GM12878 (cell line): ENCODE measurements at regions of chr18 and their contacts with region 1.

Region 1: DNA sequence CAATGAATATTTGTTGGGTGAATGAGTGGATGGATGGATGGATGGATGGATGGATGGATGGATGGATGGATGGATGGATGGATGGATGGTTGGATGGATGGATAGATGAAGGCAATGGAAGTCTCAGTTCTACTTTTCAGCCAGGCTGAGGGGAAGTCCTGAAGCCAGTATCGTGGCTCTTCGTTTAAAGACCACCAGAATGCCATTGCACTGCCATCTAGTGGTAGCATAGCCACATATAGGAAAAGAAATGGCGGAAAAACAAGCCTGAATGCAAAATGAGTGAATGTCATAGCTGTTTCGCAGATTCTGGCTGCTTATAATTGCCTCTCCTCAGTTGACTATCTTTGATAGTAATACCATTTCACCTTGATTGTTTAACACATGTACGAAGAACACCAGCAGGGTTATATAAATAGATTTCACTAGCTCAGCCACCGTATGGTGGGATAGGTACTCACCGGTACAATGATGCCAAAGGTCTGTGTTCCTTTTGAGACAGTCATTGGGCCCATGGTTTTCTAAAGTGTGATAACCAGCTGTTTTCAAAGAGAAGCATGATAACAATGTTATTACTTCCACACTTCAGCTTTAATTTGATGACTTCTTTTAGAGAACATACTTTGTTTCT is 62.3 kb upstream of the GREB1L start:
- DNase-seq: peak; percentile 32
- ATAC-seq: peak; percentile 94
- H3K4me3 ChIP-seq: no peak overlapping the region
- H3K27ac ChIP-seq: no peak overlapping the region
- H3K4me1 ChIP-seq: no peaks in the 10 kb centered on the region
- H3K27me3 ChIP-seq: no peaks in the 10 kb centered on the region
- CTCF ChIP-seq: peak; percentile 78 to 85 (median 78)
- EP300 ChIP-seq: no peak
- POLR2A ChIP-seq: no peak
- RAD21 ChIP-seq: peak; percentile 83

Region 2: DNA sequence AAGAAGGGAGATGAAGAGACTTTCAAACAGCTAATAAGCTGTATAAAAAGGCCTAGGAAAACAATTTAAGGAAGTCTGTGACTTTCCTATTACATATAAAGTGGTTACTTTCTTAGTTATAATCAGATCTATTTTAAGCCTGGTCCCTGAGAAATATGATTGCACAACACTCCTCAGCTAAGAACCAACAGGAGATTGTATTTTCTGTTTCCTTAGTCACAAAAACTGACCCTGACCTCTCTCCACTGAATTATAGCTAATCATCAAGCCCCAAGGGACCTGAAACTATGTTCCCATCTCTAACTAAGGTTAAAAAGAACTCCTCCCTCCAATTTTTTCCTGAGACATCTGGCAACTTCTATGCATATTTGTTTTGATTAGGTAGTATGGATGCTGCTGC is 175.0 kb before region 1 on chr18:
- CTCF ChIA-PET with region 1: interaction called, 9 read pairs
- POLR2A ChIA-PET with region 1: no interaction called
- RAD21 ChIA-PET with region 1: interaction called, 3 read pairs
- SMC1A ChIA-PET with region 1: interaction called, 3 read pairs
- in situ Hi-C with region 1: no loop called
- intact Hi-C with region 1: loop called (anchors 10 kb)
- DNase-seq: no peak
- ATAC-seq: no peak
- H3K4me3 ChIP-seq: no peak overlapping the region
- H3K27ac ChIP-seq: no peak overlapping the region
- H3K4me1 ChIP-seq: no peaks in the 10 kb centered on the region
- H3K27me3 ChIP-seq: no peaks in the 10 kb centered on the region
- CTCF ChIP-seq: no peak
- EP300 ChIP-seq: no peak
- POLR2A ChIP-seq: no peak
- RAD21 ChIP-seq: no peak

Region 3: DNA sequence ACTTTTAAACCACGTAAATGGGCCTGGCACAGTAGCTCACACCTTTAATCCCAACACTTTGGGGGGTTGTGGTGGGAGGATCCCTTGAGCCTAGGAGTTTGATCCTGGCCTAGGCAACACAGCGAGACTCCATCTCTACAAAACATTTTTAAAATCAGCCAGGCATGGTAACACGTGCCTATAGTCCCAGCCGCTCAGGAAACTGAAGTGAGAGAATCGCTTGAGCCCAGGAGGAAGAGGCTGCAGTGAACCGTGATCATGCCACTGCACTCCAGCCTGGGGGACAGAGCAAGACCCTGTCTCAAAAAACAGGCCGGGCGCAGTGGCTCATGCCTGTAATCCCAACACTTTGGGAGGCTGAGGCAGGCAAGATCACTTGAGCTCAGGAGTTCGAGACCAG is 80.3 kb before region 1 on chr18:
- CTCF ChIA-PET with region 1: no interaction called
- POLR2A ChIA-PET with region 1: no interaction called
- RAD21 ChIA-PET with region 1: no interaction called
- SMC1A ChIA-PET with region 1: no interaction called
- in situ Hi-C with region 1: loop called (anchors 25 kb)
- intact Hi-C with region 1: no loop called
- DNase-seq: no peak
- ATAC-seq: peak; percentile 78
- H3K4me3 ChIP-seq: peak overlapping the region; percentile 52
- H3K27ac ChIP-seq: peak overlapping the region; percentile 42
- H3K4me1 ChIP-seq: peaks cover 6% of the 10 kb centered on the region
- H3K27me3 ChIP-seq: no peaks in the 10 kb centered on the region
- CTCF ChIP-seq: no peak
- EP300 ChIP-seq: no peak
- POLR2A ChIP-seq: no peak
- RAD21 ChIP-seq: no peak

Region 4: DNA sequence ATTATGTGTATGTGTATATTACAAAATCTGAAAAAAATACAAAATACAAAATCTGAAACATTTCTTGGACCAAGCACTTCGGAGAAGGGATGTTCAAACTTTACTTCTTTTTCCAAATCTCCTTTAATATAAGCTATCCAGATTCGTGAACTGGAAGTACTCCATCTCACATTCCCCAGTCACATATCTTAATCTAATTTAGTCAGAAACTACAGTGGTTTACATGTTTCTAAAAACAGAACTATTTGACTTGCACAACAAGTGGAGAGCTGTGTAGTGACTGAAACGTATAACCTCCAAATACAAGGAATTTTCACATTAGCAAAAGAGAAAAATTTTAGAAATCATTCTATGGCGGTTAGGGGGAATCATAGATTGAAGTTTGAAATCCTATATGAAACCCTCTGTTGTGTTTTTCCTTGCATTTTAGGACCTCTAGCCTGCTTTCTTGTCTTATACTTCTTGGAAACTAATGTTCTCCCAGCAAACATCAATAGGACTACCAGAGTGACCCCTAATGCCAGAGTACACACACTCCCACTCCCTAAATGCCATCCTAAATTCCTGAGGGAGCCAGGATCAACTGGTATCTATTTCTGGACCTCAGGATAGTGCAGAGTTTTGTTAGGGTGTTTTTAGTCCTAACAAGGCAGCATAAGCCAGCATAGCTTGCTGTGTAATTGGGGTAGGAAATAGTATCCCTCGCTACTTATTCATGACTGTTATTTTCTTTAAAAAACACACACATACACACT is 37.9 kb before region 1 on chr18:
- CTCF ChIA-PET with region 1: no interaction called
- POLR2A ChIA-PET with region 1: no interaction called
- RAD21 ChIA-PET with region 1: no interaction called
- SMC1A ChIA-PET with region 1: no interaction called
- in situ Hi-C with region 1: no loop called
- intact Hi-C with region 1: loop called (anchors 5 kb)
- DNase-seq: no peak
- ATAC-seq: no peak
- H3K4me3 ChIP-seq: no peak overlapping the region
- H3K27ac ChIP-seq: no peak overlapping the region
- H3K4me1 ChIP-seq: no peaks in the 10 kb centered on the region
- H3K27me3 ChIP-seq: no peaks in the 10 kb centered on the region
- CTCF ChIP-seq: no peak
- EP300 ChIP-seq: no peak
- POLR2A ChIP-seq: no peak
- RAD21 ChIP-seq: no peak

Region 5: DNA sequence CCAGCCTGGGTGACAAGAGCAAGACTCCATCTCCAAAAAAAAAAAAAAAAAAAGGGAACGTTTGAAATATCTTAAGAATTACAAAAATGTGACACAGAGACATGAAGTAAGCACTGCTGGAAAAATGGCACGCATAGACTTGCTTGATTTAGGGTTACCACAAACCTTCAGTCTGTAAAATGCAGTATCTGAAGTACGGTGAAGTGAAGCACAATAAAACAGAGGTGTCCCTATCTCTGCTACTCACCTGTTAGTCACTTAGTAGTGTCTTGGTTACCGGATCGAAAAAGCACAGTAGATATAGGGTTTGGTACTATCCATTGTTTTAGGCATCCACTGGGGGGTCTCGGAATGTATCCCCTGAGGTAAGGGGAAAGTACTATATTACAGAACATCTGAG is 50.7 kb after region 1 on chr18:
- CTCF ChIA-PET with region 1: no interaction called
- POLR2A ChIA-PET with region 1: no interaction called
- RAD21 ChIA-PET with region 1: no interaction called
- SMC1A ChIA-PET with region 1: interaction called, 3 read pairs
- in situ Hi-C with region 1: no loop called
- intact Hi-C with region 1: loop called (anchors 10 kb)
- DNase-seq: no peak
- ATAC-seq: no peak
- H3K4me3 ChIP-seq: no peak overlapping the region
- H3K27ac ChIP-seq: no peak overlapping the region
- H3K4me1 ChIP-seq: no peaks in the 10 kb centered on the region
- H3K27me3 ChIP-seq: no peaks in the 10 kb centered on the region
- CTCF ChIP-seq: no peak
- EP300 ChIP-seq: no peak
- POLR2A ChIP-seq: no peak
- RAD21 ChIP-seq: no peak

Region 6: DNA sequence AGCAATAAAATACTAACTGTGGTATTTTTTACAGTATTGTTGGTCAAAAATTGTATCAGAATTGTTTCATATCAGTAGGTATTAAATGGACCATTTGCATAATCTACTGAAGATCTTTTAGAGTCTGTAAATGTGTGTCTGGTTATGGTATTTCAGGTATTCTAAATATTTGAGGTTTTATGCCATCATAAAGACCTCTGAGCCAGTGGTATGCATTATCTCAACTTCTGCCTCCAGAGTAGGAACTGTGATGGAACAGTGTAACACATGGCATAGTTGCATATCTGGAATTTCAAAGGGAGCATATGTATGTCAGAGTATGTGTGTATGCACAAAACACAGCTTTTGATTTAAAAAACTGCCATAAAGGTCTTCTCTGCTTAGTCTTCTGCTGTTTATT is 77.7 kb after region 1 on chr18:
- CTCF ChIA-PET with region 1: no interaction called
- POLR2A ChIA-PET with region 1: no interaction called
- RAD21 ChIA-PET with region 1: no interaction called
- SMC1A ChIA-PET with region 1: no interaction called
- in situ Hi-C with region 1: no loop called
- intact Hi-C with region 1: no loop called
- DNase-seq: no peak
- ATAC-seq: no peak
- H3K4me3 ChIP-seq: no peak overlapping the region
- H3K27ac ChIP-seq: no peak overlapping the region
- H3K4me1 ChIP-seq: no peaks in the 10 kb centered on the region
- H3K27me3 ChIP-seq: peaks cover 0 to 2% of the 10 kb centered on the region in 2 experiments; a peak in 1 of 4 replicates
- CTCF ChIP-seq: no peak
- EP300 ChIP-seq: no peak
- POLR2A ChIP-seq: no peak
- RAD21 ChIP-seq: no peak